ENCODE measurements at regions of chr1 and their contacts with region 1.

Region 1: GRCh38 chr1:104264521-104264920 is 514.8 kb downstream of the AMY1C start:
- DNase-seq: no peak
- ATAC-seq: no peak
- H3K4me3 ChIP-seq: no peak overlapping the region
- H3K27ac ChIP-seq: no peak overlapping the region
- H3K4me1 ChIP-seq: no peaks in the 10 kb centered on the region
- H3K27me3 ChIP-seq: no peaks in the 10 kb centered on the region
- CTCF ChIP-seq: no peak
- EP300 ChIP-seq: no peak
- POLR2A ChIP-seq: no peak
- RAD21 ChIP-seq: no peak

Region 2: DNA sequence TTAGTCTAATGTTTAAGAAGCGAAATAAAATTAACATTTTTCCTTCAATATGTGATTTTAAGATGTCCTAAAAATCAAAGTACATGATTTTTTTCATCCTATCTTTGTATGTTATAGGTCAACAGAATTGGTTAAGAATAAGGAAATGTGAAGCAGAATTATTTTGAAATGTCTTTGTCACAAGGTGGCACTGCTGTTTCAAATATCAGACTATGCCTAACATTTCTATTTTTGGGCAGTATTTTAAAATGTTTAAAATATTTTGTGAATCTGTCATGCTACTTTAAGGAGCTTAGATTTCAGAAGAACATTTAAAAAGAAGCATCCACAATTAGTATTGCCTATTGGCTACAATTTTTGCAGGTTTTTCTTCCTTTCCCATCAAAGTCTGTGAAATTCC is 476.1 kb before region 1 on chr1:
- CTCF ChIA-PET with region 1: no interaction called
- POLR2A ChIA-PET with region 1: no interaction called
- in situ Hi-C with region 1: no loop called
- intact Hi-C with region 1: loop called (anchors 5 kb)
- DNase-seq: no peak
- ATAC-seq: no peak
- H3K4me3 ChIP-seq: no peak overlapping the region
- H3K27ac ChIP-seq: no peak overlapping the region
- H3K4me1 ChIP-seq: no peaks in the 10 kb centered on the region
- H3K27me3 ChIP-seq: no peaks in the 10 kb centered on the region
- CTCF ChIP-seq: peak; percentile 32; the same call in 1 of the 2 replicates
- EP300 ChIP-seq: no peak
- POLR2A ChIP-seq: no peak
- RAD21 ChIP-seq: no peak